PC-3 (cell line): ENCODE measurements at regions of chr15 and their contacts with region 1.

Region 1: DNA sequence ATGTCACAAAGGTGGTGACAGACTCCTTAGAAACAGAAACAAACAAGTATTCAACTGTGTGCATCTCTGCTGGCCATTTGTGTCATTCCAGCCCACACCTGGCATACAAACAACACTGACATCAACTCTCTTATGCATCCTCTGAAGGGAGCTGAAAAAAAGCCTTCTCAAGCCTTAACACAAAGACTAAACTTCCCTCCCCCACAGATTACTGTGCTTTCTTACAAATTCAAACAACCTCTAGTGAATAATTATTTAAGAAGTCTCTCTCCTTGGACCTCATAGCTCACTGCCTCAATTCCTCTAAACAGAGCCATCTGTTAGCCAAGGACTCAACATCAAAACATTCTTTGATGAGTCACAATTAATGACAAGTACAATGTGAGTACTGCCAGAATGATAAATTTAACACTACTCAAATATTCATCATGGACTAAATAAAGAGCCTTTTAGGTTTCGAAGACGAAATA is 132.1 kb downstream of the WDR76 start:
- DNase-seq: peak; percentile 67
- ATAC-seq: peak; percentile 78
- H3K4me3 ChIP-seq: no peak overlapping the region
- H3K27ac ChIP-seq: no peak overlapping the region
- H3K4me1 ChIP-seq: peaks cover 16% of the 10 kb centered on the region
- H3K27me3 ChIP-seq: no peaks in the 10 kb centered on the region
- CTCF ChIP-seq: no peak

Region 2: GRCh38 chr15:44009056-44009455 is 50.2 kb after region 1 on chr15:
- CTCF ChIA-PET with region 1: no interaction called
- POLR2A ChIA-PET with region 1: no interaction called
- intact Hi-C with region 1: loop called (anchors 2 kb)
- DNase-seq: peak; percentile 86
- ATAC-seq: peak; percentile 99
- H3K4me3 ChIP-seq: no peak overlapping the region
- H3K27ac ChIP-seq: peak overlapping the region; percentile 37
- H3K4me1 ChIP-seq: peaks cover 19% of the 10 kb centered on the region
- H3K27me3 ChIP-seq: no peaks in the 10 kb centered on the region
- CTCF ChIP-seq: no peak

Region 3: DNA sequence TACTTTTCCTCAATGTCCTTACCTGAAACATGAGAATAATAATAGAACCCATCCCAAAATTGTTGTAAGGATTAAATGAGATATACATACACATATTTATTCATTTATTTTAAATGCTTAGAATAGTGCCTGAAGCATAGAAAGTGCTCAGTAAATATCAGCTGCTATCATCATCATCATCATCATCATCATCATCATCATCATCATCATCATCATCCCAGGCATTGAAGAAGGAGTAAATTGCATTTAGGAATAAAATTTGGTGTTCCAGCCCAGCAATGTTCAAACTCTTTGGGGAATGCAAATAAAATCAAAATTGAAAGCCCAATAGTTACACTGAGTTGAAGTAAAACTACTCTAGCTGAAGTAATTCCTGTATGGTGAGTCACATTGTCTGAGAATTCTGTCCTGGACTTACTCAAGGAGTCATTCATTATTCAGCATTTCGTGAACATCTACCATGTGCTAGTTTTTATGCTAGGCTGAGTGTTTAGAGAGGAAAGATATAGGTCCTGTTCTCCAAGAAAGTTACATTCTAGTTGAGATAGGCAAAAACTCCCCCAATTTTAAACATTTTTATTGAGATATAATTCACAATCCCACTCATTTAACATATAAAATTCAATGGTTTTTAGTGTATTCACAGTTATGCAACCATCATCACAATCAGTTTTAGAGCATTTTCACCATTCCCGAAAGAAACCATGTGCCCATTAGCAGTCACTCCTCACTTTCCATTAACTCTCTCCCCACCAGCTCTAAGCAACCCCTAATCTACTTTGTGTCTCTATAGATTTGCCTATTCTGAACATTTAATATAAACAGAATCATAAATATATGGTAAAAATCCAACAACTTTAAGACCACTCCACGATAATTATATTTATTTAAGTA is 128.9 kb after region 1 on chr15:
- CTCF ChIA-PET with region 1: no interaction called
- POLR2A ChIA-PET with region 1: interaction called, 11 read pairs
- intact Hi-C with region 1: no loop called
- DNase-seq: peak; percentile 90
- ATAC-seq: peak; percentile 93
- H3K4me3 ChIP-seq: no peak overlapping the region
- H3K27ac ChIP-seq: peak overlapping the region; percentile 64
- H3K4me1 ChIP-seq: peaks cover 33% of the 10 kb centered on the region
- H3K27me3 ChIP-seq: no peaks in the 10 kb centered on the region
- CTCF ChIP-seq: no peak